HEK293T (cell line): ENCODE measurements at regions of chr11 and their contacts with region 1.

Region 1: GRCh38 chr11:122882857-122883645 is 492 bp downstream of the JHY start:
- DNase-seq: peak; percentile 65

Region 2: GRCh38 chr11:122556605-122557004 is 326.4 kb before region 1 on chr11:
- CTCF ChIA-PET with region 1: interaction called, 10 read pairs
- POLR2A ChIA-PET with region 1: no interaction called
- DNase-seq: no peak

Region 3: DNA sequence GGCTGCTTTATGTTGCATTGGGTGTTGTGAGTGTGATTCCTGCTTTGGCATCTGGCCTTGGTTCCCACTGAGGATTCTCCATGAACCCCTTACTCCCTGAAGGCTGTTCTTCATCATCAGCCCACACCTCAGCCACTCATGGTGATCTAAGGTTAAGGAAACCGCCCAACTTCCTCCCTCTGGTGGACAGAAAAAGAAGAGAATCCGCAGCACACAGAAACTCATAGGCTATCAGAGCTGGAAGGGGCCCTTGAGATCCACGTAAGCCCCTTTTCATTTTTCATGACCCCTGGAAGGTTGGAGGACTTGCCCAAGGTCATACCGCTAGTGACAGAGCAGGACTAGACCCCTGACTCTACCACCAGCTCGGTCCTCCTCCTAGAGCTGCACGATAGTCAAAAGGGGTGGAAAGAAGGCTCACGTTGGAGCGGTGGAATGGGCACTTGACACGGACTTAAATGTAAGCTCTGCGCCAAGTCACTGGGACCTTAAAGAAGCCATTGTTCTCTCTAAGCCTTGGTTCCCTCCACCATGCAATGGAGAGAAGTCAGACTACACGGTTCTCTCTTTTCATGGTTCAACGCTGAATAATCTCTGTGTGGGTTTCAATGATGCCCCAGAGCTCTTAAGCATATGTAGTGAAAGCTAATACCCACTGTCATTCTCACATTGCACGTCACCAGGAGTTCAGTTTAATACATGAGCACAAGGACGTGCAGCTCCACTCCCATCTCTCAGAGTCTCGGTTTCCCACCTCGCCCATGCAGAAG is 128.3 kb before region 1 on chr11:
- CTCF ChIA-PET with region 1: no interaction called
- POLR2A ChIA-PET with region 1: no interaction called
- DNase-seq: peak; percentile 57

Region 4: DNA sequence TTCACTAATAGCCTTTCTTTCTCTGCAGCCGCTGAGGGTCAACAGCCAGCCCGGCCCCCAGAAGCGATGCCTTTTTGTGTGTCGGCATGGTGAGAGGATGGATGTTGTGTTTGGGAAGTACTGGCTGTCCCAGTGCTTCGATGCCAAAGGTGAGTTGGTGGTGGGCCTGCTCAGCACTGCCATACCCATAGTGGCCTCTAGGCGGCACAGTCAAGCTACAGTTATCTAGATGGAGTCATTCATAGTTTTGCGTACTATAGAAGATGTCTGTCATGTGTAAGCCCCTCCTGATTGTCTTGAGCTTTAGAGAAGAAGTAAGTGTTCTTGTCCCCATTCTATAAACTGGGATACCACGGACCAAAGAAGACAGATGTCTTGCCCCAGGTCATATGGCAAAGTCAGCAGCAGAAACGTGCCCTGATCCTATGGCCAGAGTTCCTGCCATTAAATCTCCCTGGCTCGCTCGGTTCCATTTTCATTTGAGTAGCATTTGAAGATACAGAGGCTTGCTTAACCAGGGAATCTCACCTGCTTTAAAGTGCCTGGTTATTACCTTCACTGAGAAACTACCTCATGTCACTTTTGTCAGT is 86.8 kb before region 1 on chr11:
- CTCF ChIA-PET with region 1: no interaction called
- POLR2A ChIA-PET with region 1: no interaction called
- DNase-seq: peak; percentile 73

Region 5: DNA sequence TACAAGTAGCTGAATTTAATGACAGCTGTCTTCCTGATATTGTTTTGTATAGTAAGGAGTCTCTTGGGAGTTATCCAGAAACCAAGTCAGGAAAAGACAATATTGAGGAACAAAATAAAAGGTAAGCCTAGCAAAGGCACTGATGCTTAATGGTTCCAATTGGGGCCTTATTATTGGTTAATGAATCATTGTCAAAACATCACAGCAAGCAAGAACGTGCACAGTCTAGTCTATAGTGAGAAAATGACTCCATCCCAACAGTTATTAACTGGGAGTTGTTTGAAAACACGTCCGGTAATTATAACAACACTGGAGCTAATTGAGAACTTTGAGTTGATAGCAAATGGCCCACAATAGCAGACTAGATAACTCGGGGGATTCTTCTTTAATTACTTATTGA is 80.9 kb after region 1 on chr11:
- CTCF ChIA-PET with region 1: no interaction called
- POLR2A ChIA-PET with region 1: no interaction called
- DNase-seq: no peak